Activated CD8-positive, alpha-beta T cell treated with anti-CD3 and anti-CD28 coated beads for 36 hours (primary cell): ENCODE measurements at regions of chr1 and their contacts with region 1.

Region 1: GRCh38 chr1:236759252-236759859 is 35.7 kb upstream of the MTR start:
- DNase-seq: peak; percentile 7
- ATAC-seq: peak; percentile 64
- H3K4me3 Mint-ChIP-seq: no peak overlapping the region
- H3K27ac Mint-ChIP-seq: no peak overlapping the region
- H3K4me1 Mint-ChIP-seq: no peaks in the 10 kb centered on the region
- H3K27me3 Mint-ChIP-seq: no peaks in the 10 kb centered on the region
- CTCF ChIP-seq: peak; percentile 88

Region 2: GRCh38 chr1:236590553-236591150 is 168.7 kb before region 1 on chr1:
- CTCF ChIA-PET with region 1: no interaction called
- POLR2A ChIA-PET with region 1: no interaction called
- intact Hi-C with region 1: no loop called
- DNase-seq: no peak
- ATAC-seq: no peak
- H3K4me3 Mint-ChIP-seq: no peak overlapping the region
- H3K27ac Mint-ChIP-seq: no peak overlapping the region
- H3K4me1 Mint-ChIP-seq: peaks cover 22% of the 10 kb centered on the region
- H3K27me3 Mint-ChIP-seq: no peaks in the 10 kb centered on the region
- CTCF ChIP-seq: no peak

Region 3: DNA sequence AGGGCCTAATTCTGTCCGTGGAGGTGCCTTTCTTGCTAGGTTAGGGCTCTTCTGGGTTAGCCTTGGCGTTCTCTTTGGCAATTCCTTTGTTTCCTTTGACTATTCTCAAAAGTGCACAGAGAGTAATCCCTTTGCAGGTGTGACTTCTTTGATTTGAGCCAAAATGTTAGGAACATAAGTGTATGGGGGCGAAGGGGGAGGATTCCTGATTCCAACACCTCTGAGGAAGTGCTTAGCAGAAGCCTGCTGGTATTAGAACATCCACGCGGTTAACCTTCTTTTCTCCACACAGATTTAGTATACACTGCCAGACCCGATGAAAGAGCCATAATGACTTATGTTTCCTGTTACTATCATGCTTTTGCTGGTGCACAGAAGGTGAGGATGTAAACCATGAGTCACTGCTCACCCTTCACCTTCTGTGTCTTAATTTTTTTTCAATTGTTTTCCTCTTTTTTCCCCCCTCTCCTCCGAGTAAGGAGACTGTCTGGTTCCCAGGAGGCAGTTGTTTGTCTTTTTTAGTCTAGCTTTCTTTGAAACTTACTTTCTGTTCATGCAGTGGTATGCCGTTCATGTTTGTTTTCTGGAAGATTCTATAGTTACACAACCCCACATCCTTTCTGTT is 25.1 kb before region 1 on chr1:
- CTCF ChIA-PET with region 1: interaction called, 11 read pairs
- POLR2A ChIA-PET with region 1: no interaction called
- intact Hi-C with region 1: no loop called
- DNase-seq: no peak
- ATAC-seq: peak; percentile 37
- H3K4me3 Mint-ChIP-seq: no peak overlapping the region
- H3K27ac Mint-ChIP-seq: no peak overlapping the region
- H3K4me1 Mint-ChIP-seq: peaks cover 2% of the 10 kb centered on the region
- H3K27me3 Mint-ChIP-seq: peaks cover 2% of the 10 kb centered on the region
- CTCF ChIP-seq: no peak

Region 4: GRCh38 chr1:236748471-236748870 is 10.9 kb before region 1 on chr1:
- CTCF ChIA-PET with region 1: interaction called, 19 read pairs
- POLR2A ChIA-PET with region 1: no interaction called
- intact Hi-C with region 1: no loop called
- DNase-seq: no peak
- ATAC-seq: no peak
- H3K4me3 Mint-ChIP-seq: no peak overlapping the region
- H3K27ac Mint-ChIP-seq: no peak overlapping the region
- H3K4me1 Mint-ChIP-seq: no peaks in the 10 kb centered on the region
- H3K27me3 Mint-ChIP-seq: peaks cover 19% of the 10 kb centered on the region
- CTCF ChIP-seq: no peak

Region 5: DNA sequence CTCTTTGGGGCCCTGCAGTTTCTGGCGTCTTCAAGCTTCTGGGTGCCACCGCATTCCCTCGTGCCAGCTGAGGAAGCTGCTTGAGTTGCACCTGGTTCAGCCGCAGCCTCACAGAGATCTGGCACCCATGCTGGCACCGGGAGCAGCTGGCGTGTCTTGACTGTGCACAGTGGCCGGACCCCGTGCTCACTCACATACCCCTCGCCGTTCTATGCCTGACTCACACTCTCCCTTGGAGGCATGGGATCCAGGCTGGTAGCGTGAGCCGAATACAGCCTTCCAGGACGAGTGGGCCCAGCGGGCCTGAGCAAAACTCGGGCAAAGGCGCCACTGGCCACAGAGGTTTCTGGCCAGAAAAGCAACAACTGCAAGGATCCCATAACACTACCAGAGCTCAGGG is 27.1 kb after region 1 on chr1:
- CTCF ChIA-PET with region 1: interaction called, 14 read pairs
- POLR2A ChIA-PET with region 1: interaction called, 3 read pairs
- intact Hi-C with region 1: no loop called
- DNase-seq: no peak
- ATAC-seq: no peak
- H3K4me3 Mint-ChIP-seq: no peak overlapping the region
- H3K27ac Mint-ChIP-seq: no peak overlapping the region
- H3K4me1 Mint-ChIP-seq: no peaks in the 10 kb centered on the region
- H3K27me3 Mint-ChIP-seq: no peaks in the 10 kb centered on the region
- CTCF ChIP-seq: no peak

Region 6: DNA sequence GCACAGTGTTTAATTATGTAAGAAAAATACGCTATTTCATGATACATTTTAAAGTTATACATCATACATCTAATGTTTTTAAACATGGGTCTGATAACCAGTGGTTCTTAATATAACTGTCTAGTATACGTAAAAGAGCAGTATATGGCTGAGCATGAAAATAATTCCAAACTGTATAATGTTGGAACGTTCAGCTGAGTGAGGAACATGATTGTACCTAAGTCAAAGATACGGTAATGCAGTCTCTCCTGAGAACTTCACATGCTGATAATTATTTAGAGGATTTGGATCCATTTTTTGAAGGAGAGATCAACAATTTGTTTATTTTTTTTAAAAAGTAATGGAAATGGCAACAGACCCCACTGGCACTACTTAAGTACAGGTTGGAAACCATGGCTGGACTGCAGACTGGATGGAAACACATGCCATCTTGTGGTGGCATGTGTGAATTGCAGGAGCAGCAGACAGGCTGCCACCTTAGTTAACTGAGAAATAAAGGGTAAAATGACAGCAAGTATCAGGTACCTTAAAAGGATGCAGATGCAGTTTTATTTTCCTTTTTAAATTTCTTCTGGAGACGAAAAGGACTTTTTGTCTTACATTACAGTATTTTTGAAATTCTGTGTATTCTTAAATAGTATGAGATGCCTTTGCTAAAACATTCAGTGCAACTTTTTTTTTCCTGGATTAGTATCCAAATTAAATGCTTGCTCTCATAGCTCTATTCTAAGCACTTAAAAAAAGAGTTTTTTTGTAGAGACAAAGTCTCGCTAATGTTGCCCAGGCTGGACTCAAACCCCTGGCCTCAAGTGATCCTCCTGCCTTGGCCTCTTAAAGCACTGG is 109.5 kb after region 1 on chr1:
- CTCF ChIA-PET with region 1: interaction called, 26 read pairs
- POLR2A ChIA-PET with region 1: no interaction called
- intact Hi-C with region 1: loop called (anchors 5 kb)
- DNase-seq: peak; percentile 54
- ATAC-seq: peak; percentile 83
- H3K4me3 Mint-ChIP-seq: no peak overlapping the region
- H3K27ac Mint-ChIP-seq: no peak overlapping the region
- H3K4me1 Mint-ChIP-seq: peaks cover 3% of the 10 kb centered on the region
- H3K27me3 Mint-ChIP-seq: no peaks in the 10 kb centered on the region
- CTCF ChIP-seq: peak; percentile 89

Region 7: GRCh38 chr1:236966636-236967035 is 207.3 kb after region 1 on chr1:
- CTCF ChIA-PET with region 1: no interaction called
- POLR2A ChIA-PET with region 1: no interaction called
- intact Hi-C with region 1: no loop called
- DNase-seq: no peak
- ATAC-seq: no peak
- H3K4me3 Mint-ChIP-seq: no peak overlapping the region
- H3K27ac Mint-ChIP-seq: no peak overlapping the region
- H3K4me1 Mint-ChIP-seq: no peaks in the 10 kb centered on the region
- H3K27me3 Mint-ChIP-seq: peaks cover 6% of the 10 kb centered on the region
- CTCF ChIP-seq: no peak

Region 8: GRCh38 chr1:237386362-237387143 is 627.2 kb after region 1 on chr1:
- CTCF ChIA-PET with region 1: interaction called, 10 read pairs
- POLR2A ChIA-PET with region 1: no interaction called
- intact Hi-C with region 1: loop called (anchors 10 kb)
- DNase-seq: no peak
- ATAC-seq: no peak
- H3K4me3 Mint-ChIP-seq: no peak overlapping the region
- H3K27ac Mint-ChIP-seq: no peak overlapping the region
- H3K4me1 Mint-ChIP-seq: no peaks in the 10 kb centered on the region
- H3K27me3 Mint-ChIP-seq: peaks cover 14% of the 10 kb centered on the region
- CTCF ChIP-seq: peak; percentile 68